ENCODE measurements at regions of chr16 and their contacts with region 1.

Region 1: GRCh38 chr16:20789130-20789529 is 17.1 kb downstream of the ERI2 start:
- DNase-seq: no peak
- ATAC-seq: no peak
- H3K4me3 Mint-ChIP-seq: no peak overlapping the region
- H3K27ac Mint-ChIP-seq: no peak overlapping the region
- H3K4me1 Mint-ChIP-seq: no peaks in the 10 kb centered on the region
- H3K27me3 Mint-ChIP-seq: no peaks in the 10 kb centered on the region
- CTCF ChIP-seq: no peak

Region 2: GRCh38 chr16:20774703-20775362 is 14.3 kb before region 1 on chr16:
- CTCF ChIA-PET with region 1: interaction called, 12 read pairs
- POLR2A ChIA-PET with region 1: no interaction called
- intact Hi-C with region 1: no loop called
- DNase-seq: peak; percentile 83
- ATAC-seq: peak; percentile 77
- H3K4me3 Mint-ChIP-seq: no peak overlapping the region
- H3K27ac Mint-ChIP-seq: no peak overlapping the region
- H3K4me1 Mint-ChIP-seq: no peaks in the 10 kb centered on the region
- H3K27me3 Mint-ChIP-seq: no peaks in the 10 kb centered on the region
- CTCF ChIP-seq: peak; percentile 67